ENCODE measurements at regions of chr5 and their contacts with region 1.

Region 1: GRCh38 chr5:58974083-58974482 is 391.2 kb downstream of the RAB3C start:
- DNase-seq: no peak
- H3K4me3 ChIP-seq: no peak overlapping the region
- H3K27ac ChIP-seq: no peak overlapping the region
- H3K4me1 ChIP-seq: no peaks in the 10 kb centered on the region
- H3K27me3 ChIP-seq: no peaks in the 10 kb centered on the region
- CTCF ChIP-seq: no peak

Region 2: DNA sequence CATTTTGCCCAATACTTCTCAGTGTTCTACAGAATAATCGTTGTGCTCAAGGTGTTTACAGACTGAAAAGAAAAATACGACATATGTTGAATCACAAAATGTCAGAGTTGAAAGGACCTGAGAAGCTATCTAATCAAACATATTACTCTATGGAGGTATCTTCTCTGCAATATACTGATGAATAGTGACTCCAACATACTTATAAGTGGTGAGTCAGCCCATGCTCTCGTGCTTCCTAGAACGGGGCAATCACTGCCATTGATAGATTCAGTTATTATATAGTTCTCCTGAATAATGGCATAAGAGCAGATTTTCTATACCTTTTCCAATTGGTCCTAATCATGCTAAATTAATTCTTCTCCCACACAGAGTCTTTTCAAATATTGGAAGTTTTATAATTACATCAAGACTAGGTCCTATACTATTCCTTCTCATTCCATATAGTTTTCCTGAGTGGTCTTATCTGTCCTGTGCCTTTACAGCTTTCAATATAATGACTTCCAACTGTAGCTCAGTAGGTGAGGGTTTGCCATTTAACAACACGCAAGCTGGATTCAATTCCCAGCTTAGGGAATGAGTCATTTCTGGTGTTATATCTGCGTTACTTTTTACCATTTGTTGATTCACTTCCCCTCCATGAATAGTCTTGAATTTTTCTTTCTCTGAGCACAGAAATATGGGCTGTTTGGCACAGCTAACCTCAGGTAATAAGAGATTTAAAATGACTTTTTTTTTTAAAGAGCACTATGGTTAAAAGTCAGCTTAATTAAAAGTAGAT is 595.3 kb before region 1 on chr5:
- CTCF ChIA-PET with region 1: no interaction called
- POLR2A ChIA-PET with region 1: no interaction called
- intact Hi-C with region 1: no loop called
- DNase-seq: no peak
- H3K4me3 ChIP-seq: no peak overlapping the region
- H3K27ac ChIP-seq: no peak overlapping the region
- H3K4me1 ChIP-seq: no peaks in the 10 kb centered on the region
- H3K27me3 ChIP-seq: no peaks in the 10 kb centered on the region
- CTCF ChIP-seq: no peak

Region 3: DNA sequence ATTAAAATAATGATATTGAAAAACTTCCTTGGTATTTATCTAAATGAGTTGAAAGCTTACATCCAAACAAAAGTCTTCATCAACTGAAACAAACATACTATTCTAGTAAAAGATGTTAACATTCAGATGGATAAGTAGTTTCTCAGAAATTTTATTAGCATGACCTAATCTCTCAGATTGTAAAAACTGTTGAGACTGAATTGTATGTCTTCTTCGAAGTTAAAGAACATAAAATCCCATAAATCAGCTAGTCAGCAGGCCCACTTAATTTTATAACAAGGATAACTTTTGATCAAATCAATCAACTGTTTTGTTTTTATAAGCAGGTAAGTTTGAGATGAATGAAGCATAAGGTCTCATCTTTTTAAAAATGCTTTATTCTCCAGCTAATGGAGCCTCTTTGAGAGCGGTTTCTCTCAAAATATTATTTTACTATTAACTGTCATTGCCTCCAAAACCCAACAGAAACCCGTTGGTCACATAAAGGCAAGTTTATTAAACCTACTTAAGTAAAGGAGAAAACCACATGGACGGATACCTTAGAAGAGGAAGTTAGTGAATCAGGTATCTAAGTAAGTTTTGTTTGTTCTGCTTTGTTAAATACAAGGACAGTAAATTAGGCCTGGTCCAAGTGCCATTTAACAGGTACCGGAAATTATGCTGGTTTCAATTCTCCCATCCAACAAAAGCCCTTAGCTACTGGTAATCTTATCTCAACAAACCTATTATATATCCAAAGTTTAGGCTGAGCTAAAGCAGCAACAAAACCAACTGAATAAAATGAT is 462.5 kb after region 1 on chr5:
- CTCF ChIA-PET with region 1: no interaction called
- POLR2A ChIA-PET with region 1: interaction called, 10 read pairs
- intact Hi-C with region 1: no loop called
- DNase-seq: no peak
- H3K4me3 ChIP-seq: no peak overlapping the region
- H3K27ac ChIP-seq: no peak overlapping the region
- H3K4me1 ChIP-seq: no peaks in the 10 kb centered on the region
- H3K27me3 ChIP-seq: no peaks in the 10 kb centered on the region
- CTCF ChIP-seq: no peak